ENCODE measurements at regions of chr1 and their contacts with region 1.

Region 1: GRCh38 chr1:6438047-6438525 is 13.5 kb downstream of the ESPN start:
- DNase-seq: peak; percentile 77
- H3K4me3 Mint-ChIP-seq: no peak overlapping the region
- H3K27ac Mint-ChIP-seq: no peak overlapping the region
- H3K4me1 Mint-ChIP-seq: peaks cover 13% of the 10 kb centered on the region
- H3K27me3 Mint-ChIP-seq: no peaks in the 10 kb centered on the region
- CTCF ChIP-seq: peak; percentile 89

Region 2: DNA sequence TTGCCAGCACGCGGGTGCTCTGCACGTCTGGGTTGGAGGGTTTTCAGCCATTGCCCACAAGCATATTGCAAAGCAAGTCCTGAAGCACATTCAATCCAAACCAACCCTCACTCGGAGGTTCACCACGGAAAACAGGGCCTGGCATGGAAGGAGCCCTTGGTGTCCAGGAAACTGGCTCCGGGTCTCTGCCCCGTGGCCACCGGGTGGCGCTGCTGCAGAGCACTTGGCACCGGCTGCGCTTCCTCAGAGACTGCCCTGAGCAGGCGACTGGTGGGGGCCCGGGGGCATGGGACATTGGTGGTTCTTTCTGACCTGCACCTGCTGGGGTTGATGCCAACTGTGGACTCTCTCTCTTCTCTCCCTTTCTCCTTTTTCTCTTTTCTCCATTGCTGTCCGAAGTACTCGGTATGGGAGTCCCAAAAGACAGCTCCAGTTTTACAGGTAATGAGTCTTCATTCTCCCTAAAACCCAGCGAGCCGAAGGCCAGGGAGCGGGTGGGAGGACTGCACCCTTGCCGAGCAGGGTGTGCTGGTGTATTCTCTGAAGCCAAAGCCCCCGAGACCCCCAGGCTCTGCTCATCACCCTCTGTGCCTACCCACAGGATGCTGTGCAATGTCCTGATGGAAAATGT is 396.5 kb before region 1 on chr1:
- CTCF ChIA-PET with region 1: no interaction called
- POLR2A ChIA-PET with region 1: no interaction called
- intact Hi-C with region 1: no loop called
- DNase-seq: peak; percentile 27
- H3K4me3 Mint-ChIP-seq: no peak overlapping the region
- H3K27ac Mint-ChIP-seq: no peak overlapping the region
- H3K4me1 Mint-ChIP-seq: no peaks in the 10 kb centered on the region
- H3K27me3 Mint-ChIP-seq: no peaks in the 10 kb centered on the region
- CTCF ChIP-seq: peak; percentile 32

Region 3: DNA sequence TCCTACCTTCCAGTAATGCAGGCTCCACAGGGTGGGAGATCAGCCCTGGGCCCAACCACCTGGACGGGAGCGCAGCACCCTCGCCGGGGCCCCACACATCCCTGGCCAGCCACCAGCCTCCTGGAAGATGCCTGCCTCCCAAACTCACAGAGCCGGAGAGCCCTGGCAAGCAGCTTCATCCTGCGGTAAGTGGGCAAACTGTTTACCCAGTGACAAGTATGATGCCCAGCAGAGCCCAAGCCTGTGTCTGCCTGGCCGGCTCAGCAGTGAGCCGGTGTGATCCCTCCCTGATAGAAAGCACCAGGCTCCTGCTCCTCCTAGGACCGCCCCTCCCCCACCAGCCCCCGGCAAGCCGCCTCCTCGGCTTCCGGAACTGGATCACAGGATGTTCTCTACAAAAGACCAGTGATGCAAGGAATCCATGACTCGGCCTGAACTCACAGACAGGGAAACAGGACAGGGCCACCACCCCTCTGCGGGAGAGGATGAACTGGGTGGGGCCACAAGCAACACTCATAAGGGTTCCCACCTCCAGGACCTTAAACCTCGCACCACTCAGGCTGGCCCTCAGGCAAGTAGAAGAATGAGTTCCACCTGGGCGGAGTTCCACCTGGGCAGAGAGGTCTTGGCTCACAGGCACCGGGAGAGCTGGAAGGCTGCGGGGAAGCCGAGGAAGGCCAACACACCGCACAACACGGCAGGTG is 52.4 kb before region 1 on chr1:
- CTCF ChIA-PET with region 1: interaction called, 15 read pairs
- POLR2A ChIA-PET with region 1: no interaction called
- intact Hi-C with region 1: no loop called
- DNase-seq: peak; percentile 97
- H3K4me3 Mint-ChIP-seq: peak overlapping the region; percentile 89
- H3K27ac Mint-ChIP-seq: peak overlapping the region; percentile 81
- H3K4me1 Mint-ChIP-seq: peaks cover 25% of the 10 kb centered on the region
- H3K27me3 Mint-ChIP-seq: no peaks in the 10 kb centered on the region
- CTCF ChIP-seq: no peak

Region 4: DNA sequence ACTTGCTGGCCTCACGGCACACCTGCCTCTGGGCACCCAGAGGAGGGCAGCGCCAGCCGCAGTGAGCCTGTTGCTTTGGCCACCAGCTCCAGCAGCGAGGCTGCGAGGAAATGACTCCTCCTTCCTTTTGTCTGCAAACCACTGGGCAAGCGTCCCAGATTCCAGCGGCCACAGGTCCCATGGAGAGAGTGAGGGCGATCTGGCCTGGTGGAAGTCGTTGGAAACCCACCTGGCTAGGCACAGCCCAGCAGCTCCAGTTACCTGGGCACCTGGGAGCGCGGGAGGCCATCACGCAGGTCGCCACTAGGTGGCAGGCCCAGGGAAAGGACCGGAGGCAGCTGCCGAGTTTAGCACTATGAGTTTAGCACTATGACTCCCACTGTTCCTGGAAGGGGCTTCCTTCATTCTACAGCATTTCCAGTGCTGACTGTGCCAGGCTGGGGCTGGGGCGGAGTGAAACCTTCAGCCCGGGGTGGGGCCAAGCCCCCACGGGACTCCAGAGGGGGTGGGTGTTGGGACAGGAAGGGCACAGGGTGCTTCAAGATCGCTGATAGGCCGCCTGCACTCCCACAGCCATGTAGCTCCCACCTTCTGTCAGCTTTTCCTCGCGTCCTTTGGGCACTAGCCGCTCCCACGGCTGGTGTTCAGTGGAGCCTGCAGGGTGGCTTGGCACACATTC is 14.6 kb before region 1 on chr1:
- CTCF ChIA-PET with region 1: interaction called, 118 read pairs
- POLR2A ChIA-PET with region 1: interaction called, 17 read pairs
- intact Hi-C with region 1: loop called (anchors 1 kb)
- DNase-seq: peak; percentile 91
- H3K4me3 Mint-ChIP-seq: no peak overlapping the region
- H3K27ac Mint-ChIP-seq: no peak overlapping the region
- H3K4me1 Mint-ChIP-seq: peaks cover 25% of the 10 kb centered on the region
- H3K27me3 Mint-ChIP-seq: no peaks in the 10 kb centered on the region
- CTCF ChIP-seq: peak; percentile 66

Region 5: DNA sequence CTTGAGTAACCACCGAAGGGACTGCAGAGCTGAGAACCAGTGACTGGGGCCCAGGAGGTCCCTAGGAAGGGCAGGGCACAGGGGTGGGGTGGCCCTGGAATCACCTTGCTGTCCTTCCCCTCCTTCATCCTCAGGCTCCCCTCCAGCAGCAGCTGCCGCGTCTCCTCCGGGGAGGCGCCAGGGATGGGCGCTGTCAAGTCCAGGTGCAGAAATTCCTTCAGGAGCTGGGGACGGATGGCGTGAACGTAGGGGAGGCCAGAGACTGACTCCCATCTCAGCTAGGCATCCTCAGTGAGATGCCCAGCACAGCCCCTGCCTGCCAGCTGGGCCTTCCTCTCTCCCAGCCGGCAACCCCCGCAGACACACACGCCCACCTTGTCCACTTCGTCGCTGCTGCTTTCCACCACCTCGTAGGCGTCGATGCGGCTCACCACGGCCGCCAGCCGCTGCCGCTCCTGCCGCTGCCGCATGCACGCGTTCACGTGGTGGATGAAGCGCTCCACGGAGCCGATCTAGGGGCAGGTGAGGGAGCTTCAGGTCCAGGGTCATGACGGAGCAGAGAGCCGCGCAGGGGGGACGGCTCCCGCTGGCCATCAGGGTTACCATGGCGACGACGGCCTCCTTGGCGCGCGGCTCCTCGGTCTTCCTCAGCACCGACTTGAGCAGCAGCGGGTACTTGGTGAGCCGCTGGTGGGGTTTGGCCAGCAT is 32.2 kb after region 1 on chr1:
- CTCF ChIA-PET with region 1: interaction called, 12 read pairs
- POLR2A ChIA-PET with region 1: interaction called, 4 read pairs
- intact Hi-C with region 1: no loop called
- DNase-seq: no peak
- H3K4me3 Mint-ChIP-seq: no peak overlapping the region
- H3K27ac Mint-ChIP-seq: no peak overlapping the region
- H3K4me1 Mint-ChIP-seq: peaks cover 8% of the 10 kb centered on the region
- H3K27me3 Mint-ChIP-seq: no peaks in the 10 kb centered on the region
- CTCF ChIP-seq: no peak

Region 6: GRCh38 chr1:6602669-6603237 is 164.7 kb after region 1 on chr1 and contains the start of gene KLHL21:
- CTCF ChIA-PET with region 1: no interaction called
- POLR2A ChIA-PET with region 1: no interaction called
- intact Hi-C with region 1: no loop called
- DNase-seq: peak; percentile 82
- H3K4me3 Mint-ChIP-seq: peak within 1 kb of the TSS; percentile 99
- H3K27ac Mint-ChIP-seq: peak within 1 kb of the TSS; percentile 99
- H3K4me1 Mint-ChIP-seq: peaks cover 17% of the 10 kb centered on the region
- H3K27me3 Mint-ChIP-seq: no peaks in the 10 kb centered on the region
- CTCF ChIP-seq: no peak
- total RNA-seq, gene KLHL21: 14.0 and 19.5 TPM in 2 replicates

Region 7: DNA sequence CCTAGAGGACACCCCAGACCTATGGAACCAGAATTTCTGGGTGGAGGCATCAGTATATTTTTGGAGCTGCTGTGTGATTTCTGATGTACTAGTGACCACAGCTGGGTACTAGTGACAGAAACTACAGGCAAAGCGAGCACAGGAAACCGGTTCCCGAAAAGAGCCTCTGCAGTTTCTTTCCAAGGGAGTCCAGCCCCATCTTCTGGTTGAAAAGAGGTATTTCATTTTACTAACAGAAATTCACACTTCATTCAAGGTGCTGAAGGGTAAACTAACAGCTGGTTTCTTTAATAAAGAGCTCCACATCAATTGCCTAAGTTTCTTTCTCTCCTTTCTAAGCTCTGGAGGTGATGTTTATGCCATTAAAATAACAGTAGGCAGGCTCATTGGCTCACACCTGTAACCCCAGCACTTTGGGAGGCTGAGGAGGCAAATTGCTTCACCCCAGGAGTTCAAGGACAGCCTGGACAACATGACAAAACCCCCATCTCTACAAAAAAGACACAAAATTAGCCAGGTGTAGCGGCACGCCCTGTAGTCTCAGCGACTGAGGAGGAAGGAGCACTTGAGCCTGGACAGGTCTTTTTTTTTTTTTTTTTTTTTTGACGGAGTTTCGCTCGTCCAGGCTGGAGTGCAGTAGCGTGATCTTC is 208.5 kb after region 1 on chr1:
- CTCF ChIA-PET with region 1: no interaction called
- POLR2A ChIA-PET with region 1: no interaction called
- intact Hi-C with region 1: no loop called
- DNase-seq: peak; percentile 48
- H3K4me3 Mint-ChIP-seq: no peak overlapping the region
- H3K27ac Mint-ChIP-seq: no peak overlapping the region
- H3K4me1 Mint-ChIP-seq: no peaks in the 10 kb centered on the region
- H3K27me3 Mint-ChIP-seq: no peaks in the 10 kb centered on the region
- CTCF ChIP-seq: peak; percentile 47

Measured in MCF 10A (cell line).